GM12878 (cell line): ENCODE measurements at regions of chr1 and their contacts with region 1.

Region 1: GRCh38 chr1:116724765-116725375 is 29.4 kb upstream of the CD2 start:
- DNase-seq: no peak
- ATAC-seq: peak; percentile 88
- H3K4me3 ChIP-seq: no peak overlapping the region
- H3K27ac ChIP-seq: no peak overlapping the region
- H3K4me1 ChIP-seq: no peaks in the 10 kb centered on the region
- H3K27me3 ChIP-seq: no peaks in the 10 kb centered on the region
- CTCF ChIP-seq: peak; percentile 70 to 78 (median 72)
- EP300 ChIP-seq: no peak
- POLR2A ChIP-seq: no peak
- RAD21 ChIP-seq: peak; percentile 80

Region 2: GRCh38 chr1:116605315-116605714 is 119.6 kb before region 1 on chr1:
- CTCF ChIA-PET with region 1: no interaction called
- POLR2A ChIA-PET with region 1: no interaction called
- RAD21 ChIA-PET with region 1: no interaction called
- SMC1A ChIA-PET with region 1: no interaction called
- in situ Hi-C with region 1: no loop called
- intact Hi-C with region 1: no loop called
- DNase-seq: no peak
- ATAC-seq: no peak
- H3K4me3 ChIP-seq: no peak overlapping the region
- H3K27ac ChIP-seq: no peak overlapping the region
- H3K4me1 ChIP-seq: no peaks in the 10 kb centered on the region
- H3K27me3 ChIP-seq: no peaks in the 10 kb centered on the region
- CTCF ChIP-seq: no peak
- EP300 ChIP-seq: no peak
- POLR2A ChIP-seq: no peak
- RAD21 ChIP-seq: no peak

Region 3: GRCh38 chr1:116711263-116711840 is 13.5 kb before region 1 on chr1:
- CTCF ChIA-PET with region 1: interaction called, 39 read pairs
- POLR2A ChIA-PET with region 1: no interaction called
- RAD21 ChIA-PET with region 1: interaction called, 3 read pairs
- SMC1A ChIA-PET with region 1: interaction called, 6 read pairs
- in situ Hi-C with region 1: no loop called
- intact Hi-C with region 1: no loop called
- DNase-seq: no peak
- ATAC-seq: peak; percentile 78
- H3K4me3 ChIP-seq: no peak overlapping the region
- H3K27ac ChIP-seq: no peak overlapping the region
- H3K4me1 ChIP-seq: no peaks in the 10 kb centered on the region
- H3K27me3 ChIP-seq: no peaks in the 10 kb centered on the region
- CTCF ChIP-seq: no peak
- EP300 ChIP-seq: no peak
- POLR2A ChIP-seq: no peak
- RAD21 ChIP-seq: no peak

Region 4: DNA sequence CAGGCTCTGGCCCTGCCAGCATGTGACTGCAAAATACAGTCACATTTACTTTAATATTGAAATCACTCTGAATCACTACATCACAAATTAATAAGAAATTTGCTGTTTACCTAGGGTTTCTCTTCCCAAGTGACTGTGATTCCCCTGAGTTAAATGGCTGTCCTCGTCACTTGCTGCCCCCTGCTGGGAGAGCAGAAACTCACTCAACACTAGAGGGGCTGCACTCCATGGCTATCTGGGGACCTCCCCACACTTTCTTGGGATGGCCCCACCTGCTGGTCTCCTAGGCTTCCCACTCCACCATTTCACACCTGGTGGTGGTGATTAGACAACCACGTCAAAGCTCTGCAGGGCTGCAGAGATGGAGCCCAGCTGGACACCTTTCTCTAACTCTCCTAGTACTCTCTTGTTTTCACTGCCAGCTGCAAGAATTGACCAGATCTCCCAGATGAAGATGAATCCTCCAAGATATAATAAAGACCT is 92.8 kb after region 1 on chr1:
- CTCF ChIA-PET with region 1: interaction called, 21 read pairs
- POLR2A ChIA-PET with region 1: no interaction called
- RAD21 ChIA-PET with region 1: interaction called, 8 read pairs
- SMC1A ChIA-PET with region 1: interaction called, 25 read pairs
- in situ Hi-C with region 1: no loop called
- intact Hi-C with region 1: loop called (anchors 1 kb)
- DNase-seq: no peak
- ATAC-seq: peak; percentile 91
- H3K4me3 ChIP-seq: no peak overlapping the region
- H3K27ac ChIP-seq: no peak overlapping the region
- H3K4me1 ChIP-seq: peaks cover 4% of the 10 kb centered on the region; the same call in 1 of the 2 replicates
- H3K27me3 ChIP-seq: no peaks in the 10 kb centered on the region
- CTCF ChIP-seq: peak; percentile 76 to 78 (median 77)
- EP300 ChIP-seq: no peak
- POLR2A ChIP-seq: no peak
- RAD21 ChIP-seq: peak; percentile 90

Region 5: GRCh38 chr1:116895073-116895472 is 170.2 kb after region 1 on chr1:
- CTCF ChIA-PET with region 1: no interaction called
- POLR2A ChIA-PET with region 1: no interaction called
- RAD21 ChIA-PET with region 1: no interaction called
- SMC1A ChIA-PET with region 1: no interaction called
- in situ Hi-C with region 1: no loop called
- intact Hi-C with region 1: no loop called
- DNase-seq: no peak
- ATAC-seq: no peak
- H3K4me3 ChIP-seq: no peak overlapping the region
- H3K27ac ChIP-seq: no peak overlapping the region
- H3K4me1 ChIP-seq: no peaks in the 10 kb centered on the region
- H3K27me3 ChIP-seq: no peaks in the 10 kb centered on the region; a peak in 1 of 4 replicates
- CTCF ChIP-seq: no peak
- EP300 ChIP-seq: no peak
- POLR2A ChIP-seq: no peak
- RAD21 ChIP-seq: no peak

Region 6: DNA sequence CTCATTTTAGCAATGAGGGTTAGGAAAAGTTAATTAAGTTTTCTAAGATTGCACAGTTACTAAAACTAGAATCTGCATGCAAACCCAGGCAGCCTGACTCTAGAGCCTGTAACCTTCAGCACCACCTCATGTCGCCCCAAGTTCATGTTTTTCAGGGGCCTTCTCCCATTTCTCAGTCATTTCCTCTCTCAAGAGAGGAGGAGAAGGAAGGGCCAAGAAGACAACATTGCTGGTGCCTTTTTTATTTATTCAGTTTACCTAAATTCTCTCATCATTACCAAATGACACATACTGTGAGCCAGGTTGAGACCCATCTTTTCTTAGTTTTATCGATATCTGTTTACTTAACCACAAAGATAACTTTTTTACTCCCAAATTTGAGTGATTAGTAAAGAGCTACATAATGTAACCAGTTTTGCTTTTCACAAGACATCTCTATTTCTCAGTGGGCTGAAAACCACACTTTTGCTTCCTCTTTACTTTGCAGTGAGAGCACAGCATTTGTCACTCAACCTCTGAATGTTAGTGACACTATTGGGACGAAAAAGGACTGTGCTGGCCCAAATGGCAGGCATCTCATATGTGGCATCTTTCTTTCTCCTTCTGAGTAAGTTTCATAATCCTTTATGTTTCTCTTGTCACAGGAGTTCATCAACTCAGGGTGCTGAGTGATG is 276.5 kb after region 1 on chr1 and contains the start of gene CD101:
- CTCF ChIA-PET with region 1: interaction called, 13 read pairs
- POLR2A ChIA-PET with region 1: no interaction called
- RAD21 ChIA-PET with region 1: interaction called, 3 read pairs
- SMC1A ChIA-PET with region 1: interaction called, 3 read pairs
- in situ Hi-C with region 1: no loop called
- intact Hi-C with region 1: no loop called
- DNase-seq: peak; percentile 82
- ATAC-seq: peak; percentile 95
- H3K4me3 ChIP-seq: peak within 1 kb of the TSS; percentile 6; the same call in 1 of the 2 replicates
- H3K27ac ChIP-seq: peak within 1 kb of the TSS; percentile 49
- H3K4me1 ChIP-seq: peaks cover 20% of the 10 kb centered on the region
- H3K27me3 ChIP-seq: no peaks in the 10 kb centered on the region
- CTCF ChIP-seq: no peak
- EP300 ChIP-seq: peak; percentile 66 to 85
- POLR2A ChIP-seq: no peak
- RAD21 ChIP-seq: peak; percentile 36; the same call in 1 of the 2 replicates
- polyA plus RNA-seq, gene CD101: 1.9 to 2.7 TPM

Region 7: GRCh38 chr1:117059678-117060440 is 335.0 kb after region 1 on chr1 and contains the start of gene TTF2:
- CTCF ChIA-PET with region 1: interaction called, 134 read pairs
- POLR2A ChIA-PET with region 1: no interaction called
- RAD21 ChIA-PET with region 1: interaction called, 39 read pairs
- SMC1A ChIA-PET with region 1: interaction called, 73 read pairs
- in situ Hi-C with region 1: no loop called
- intact Hi-C with region 1: no loop called
- DNase-seq: peak; percentile 99
- ATAC-seq: peak; percentile 86
- H3K4me3 ChIP-seq: peak within 1 kb of the TSS; percentile 84
- H3K27ac ChIP-seq: peak within 1 kb of the TSS; percentile 90
- H3K4me1 ChIP-seq: peaks cover 4% of the 10 kb centered on the region
- H3K27me3 ChIP-seq: no peaks in the 10 kb centered on the region
- CTCF ChIP-seq: peak in 1 of 3 experiments; percentile 26; a peak in 1 of 6 replicates
- EP300 ChIP-seq: peak in 1 of 2 experiments; percentile 40; a peak in 1 of 4 replicates
- POLR2A ChIP-seq: peak; percentile 85
- RAD21 ChIP-seq: no peak
- polyA plus RNA-seq, gene TTF2: 17.7 to 20.8 TPM